ENCODE measurements at regions of chr1 and their contacts with region 1.

Region 1: DNA sequence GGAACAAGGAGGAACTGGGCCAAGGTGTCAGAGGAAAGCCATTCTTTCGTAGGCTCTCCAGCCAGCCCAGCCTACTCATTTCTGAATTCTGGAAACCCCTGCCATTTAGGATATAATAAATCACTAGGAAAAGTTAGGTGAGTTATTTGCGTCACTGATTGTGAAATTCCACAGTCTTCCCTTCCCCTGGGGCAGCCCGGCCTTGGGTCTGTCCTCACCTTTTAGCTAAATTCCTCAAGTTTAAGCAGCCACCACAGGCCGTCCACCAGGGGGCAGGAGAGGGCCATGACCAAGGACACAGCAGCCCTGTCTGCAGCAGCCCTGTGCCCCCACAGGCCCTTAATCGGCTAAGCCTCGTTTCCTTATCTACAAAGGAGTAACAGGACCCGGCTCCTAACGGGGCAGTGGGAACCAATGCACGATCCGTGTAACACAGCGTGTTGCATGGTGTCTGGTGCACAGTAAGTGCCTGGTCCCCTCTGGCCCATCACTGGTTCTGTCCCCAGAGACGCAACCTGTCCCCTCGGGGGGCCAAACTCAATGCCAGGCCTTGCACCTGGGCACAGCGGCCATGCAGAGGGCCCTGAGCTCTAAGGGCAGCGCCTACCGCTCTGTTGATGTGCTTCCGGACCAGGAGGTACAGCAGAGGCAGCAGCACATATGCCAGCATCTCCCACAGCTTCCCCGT is 18.1 kb downstream of the GPR157 start:
- DNase-seq: peak; percentile 79
- ATAC-seq: peak; percentile 93
- H3K4me3 Mint-ChIP-seq: no peak overlapping the region
- H3K27ac Mint-ChIP-seq: no peak overlapping the region
- H3K4me1 Mint-ChIP-seq: peaks cover 4% of the 10 kb centered on the region
- H3K27me3 Mint-ChIP-seq: no peaks in the 10 kb centered on the region
- CTCF ChIP-seq: peak; percentile 76

Region 2: DNA sequence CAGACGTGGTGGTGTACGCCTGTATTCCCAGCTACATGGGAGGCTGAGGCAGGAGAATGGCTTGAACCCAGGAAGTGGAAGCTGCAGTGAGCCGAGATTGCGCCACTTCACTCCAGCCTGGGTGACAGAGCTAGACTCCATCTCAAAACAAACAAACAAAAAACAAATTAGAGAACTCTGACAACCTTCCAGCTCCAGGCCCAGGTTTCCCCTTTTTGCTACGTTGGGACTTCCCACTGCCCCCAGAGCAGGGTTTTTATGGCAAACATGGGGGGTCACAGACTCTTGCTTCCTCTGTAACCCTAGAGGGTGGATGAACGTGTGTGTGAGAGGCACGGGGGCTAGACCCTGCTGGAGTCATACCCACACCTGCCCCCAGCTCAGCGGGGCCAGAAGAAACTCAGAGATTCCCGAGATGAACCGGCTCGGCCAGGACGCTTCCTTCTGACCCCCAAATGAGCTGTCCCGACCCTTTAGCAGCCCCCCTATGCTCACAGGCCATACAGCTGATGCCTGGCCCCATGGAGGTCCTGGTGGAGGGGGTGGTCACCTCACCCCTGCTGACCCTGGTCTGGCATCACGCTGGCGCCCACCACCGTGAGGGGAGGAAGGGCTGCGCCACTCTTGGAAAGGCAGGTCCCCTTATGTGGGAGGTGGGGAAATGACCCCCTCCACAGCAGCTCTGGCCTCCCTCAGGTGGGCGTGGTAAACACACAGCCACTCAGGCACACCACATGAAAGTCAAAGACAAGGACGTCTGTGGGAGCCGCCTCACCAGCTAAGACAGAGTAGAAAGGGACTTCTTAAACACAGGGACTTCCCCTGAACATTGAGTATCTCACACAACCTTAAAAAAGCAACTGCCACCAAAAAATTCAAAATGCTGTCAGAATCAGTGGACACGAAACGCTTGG is 10.9 kb after region 1 on chr1:
- CTCF ChIA-PET with region 1: interaction called, 19 read pairs
- POLR2A ChIA-PET with region 1: no interaction called
- intact Hi-C with region 1: no loop called
- DNase-seq: no peak
- ATAC-seq: peak; percentile 91
- H3K4me3 Mint-ChIP-seq: peak overlapping the region; percentile 32
- H3K27ac Mint-ChIP-seq: no peak overlapping the region
- H3K4me1 Mint-ChIP-seq: peaks cover 43% of the 10 kb centered on the region
- H3K27me3 Mint-ChIP-seq: no peaks in the 10 kb centered on the region
- CTCF ChIP-seq: no peak

Region 3: GRCh38 chr1:9145021-9145668 is 34.3 kb after region 1 on chr1:
- CTCF ChIA-PET with region 1: interaction called, 16 read pairs
- POLR2A ChIA-PET with region 1: no interaction called
- intact Hi-C with region 1: loop called (anchors 1 kb)
- DNase-seq: no peak
- ATAC-seq: no peak
- H3K4me3 Mint-ChIP-seq: no peak overlapping the region
- H3K27ac Mint-ChIP-seq: no peak overlapping the region
- H3K4me1 Mint-ChIP-seq: peaks cover 3% of the 10 kb centered on the region
- H3K27me3 Mint-ChIP-seq: peaks cover 3% of the 10 kb centered on the region
- CTCF ChIP-seq: no peak

Region 4: GRCh38 chr1:9181176-9181906 is 70.5 kb after region 1 on chr1:
- CTCF ChIA-PET with region 1: interaction called, 12 read pairs
- POLR2A ChIA-PET with region 1: no interaction called
- intact Hi-C with region 1: no loop called
- DNase-seq: peak; percentile 73
- ATAC-seq: peak; percentile 59
- H3K4me3 Mint-ChIP-seq: peak overlapping the region; percentile 82
- H3K27ac Mint-ChIP-seq: no peak overlapping the region
- H3K4me1 Mint-ChIP-seq: peaks cover 19% of the 10 kb centered on the region
- H3K27me3 Mint-ChIP-seq: peaks cover 19% of the 10 kb centered on the region
- CTCF ChIP-seq: peak; percentile 91

Region 5: GRCh38 chr1:9196129-9197040 is 85.6 kb after region 1 on chr1:
- CTCF ChIA-PET with region 1: interaction called, 47 read pairs
- POLR2A ChIA-PET with region 1: interaction called, 6 read pairs
- intact Hi-C with region 1: loop called (anchors 1 kb)
- DNase-seq: peak; percentile 51
- ATAC-seq: peak; percentile 82
- H3K4me3 Mint-ChIP-seq: peak overlapping the region; percentile 57
- H3K27ac Mint-ChIP-seq: no peak overlapping the region
- H3K4me1 Mint-ChIP-seq: peaks cover 16% of the 10 kb centered on the region
- H3K27me3 Mint-ChIP-seq: peaks cover 33% of the 10 kb centered on the region
- CTCF ChIP-seq: no peak

Region 6: GRCh38 chr1:9201401-9202239 is 90.8 kb after region 1 on chr1:
- CTCF ChIA-PET with region 1: interaction called, 47 read pairs
- POLR2A ChIA-PET with region 1: interaction called, 6 read pairs
- intact Hi-C with region 1: loop called (anchors 1 kb)
- DNase-seq: no peak
- ATAC-seq: no peak
- H3K4me3 Mint-ChIP-seq: peak overlapping the region; percentile 46
- H3K27ac Mint-ChIP-seq: no peak overlapping the region
- H3K4me1 Mint-ChIP-seq: peaks cover 24% of the 10 kb centered on the region
- H3K27me3 Mint-ChIP-seq: peaks cover 68% of the 10 kb centered on the region
- CTCF ChIP-seq: no peak

Region 7: DNA sequence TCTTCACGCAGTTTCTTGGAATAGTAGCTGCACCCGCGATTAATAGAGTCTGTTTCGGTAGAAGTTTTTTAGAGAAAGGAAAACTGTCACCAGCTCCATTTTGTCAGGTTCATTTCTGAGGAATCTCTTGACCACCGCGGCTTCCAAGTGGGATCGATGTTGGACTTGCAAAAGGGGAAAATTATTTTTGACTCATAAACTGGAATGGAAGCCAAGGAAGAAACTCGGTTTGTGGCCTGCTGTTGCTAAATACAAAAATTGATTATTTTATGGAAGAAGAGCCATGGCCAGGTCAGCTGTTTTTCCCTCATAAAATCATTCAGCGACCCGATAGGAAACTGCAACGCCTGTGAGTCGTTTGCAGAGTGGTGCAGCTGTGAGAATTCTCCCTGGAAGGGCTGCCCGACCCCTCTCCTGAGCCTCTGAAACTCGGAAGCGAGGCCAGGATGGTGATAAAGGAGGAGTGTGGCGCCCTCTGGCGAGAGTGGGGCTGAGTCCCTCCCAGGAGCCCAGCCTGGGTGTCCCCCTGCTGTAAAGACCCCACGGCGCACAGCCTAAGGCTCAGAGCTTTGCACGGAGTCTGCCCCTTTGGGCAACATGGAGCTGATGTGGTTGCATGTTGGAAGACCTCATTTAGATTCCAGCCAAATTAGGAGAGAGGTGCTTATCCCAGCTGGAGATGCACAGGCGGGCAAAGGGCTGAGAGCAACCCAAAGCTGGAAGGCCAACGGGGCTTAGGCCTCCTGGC is 344.8 kb after region 1 on chr1:
- CTCF ChIA-PET with region 1: interaction called, 11 read pairs
- POLR2A ChIA-PET with region 1: no interaction called
- intact Hi-C with region 1: no loop called
- DNase-seq: peak; percentile 57
- ATAC-seq: peak; percentile 79
- H3K4me3 Mint-ChIP-seq: no peak overlapping the region
- H3K27ac Mint-ChIP-seq: no peak overlapping the region
- H3K4me1 Mint-ChIP-seq: peaks cover 2% of the 10 kb centered on the region
- H3K27me3 Mint-ChIP-seq: peaks cover 3% of the 10 kb centered on the region
- CTCF ChIP-seq: no peak